K562 (cell line): ENCODE measurements at regions of chr13 and their contacts with region 1.

Region 1: GRCh38 chr13:41061075-41061913 is at the start of gene WBP4:
- DNase-seq: peak; percentile 71 to 92 (median 78)
- ATAC-seq: peak; percentile 83
- H3K4me3 ChIP-seq: peak within 1 kb of the TSS; percentile 60
- H3K27ac ChIP-seq: peak within 1 kb of the TSS; percentile 96
- H3K4me1 ChIP-seq: peaks cover 9 to 19% of the 10 kb centered on the region in 2 experiments; a peak in 3 of 5 replicates
- H3K27me3 ChIP-seq: no peaks in the 10 kb centered on the region
- CTCF ChIP-seq: peak; percentile 0 to 21 (median 12); a peak in 1 of 6 replicates
- EP300 ChIP-seq: no peak
- POLR2A ChIP-seq: peak; percentile 73
- RAD21 ChIP-seq: no peak
- polyA plus RNA-seq, gene WBP4: 5.5 to 6.1 TPM

Region 2: DNA sequence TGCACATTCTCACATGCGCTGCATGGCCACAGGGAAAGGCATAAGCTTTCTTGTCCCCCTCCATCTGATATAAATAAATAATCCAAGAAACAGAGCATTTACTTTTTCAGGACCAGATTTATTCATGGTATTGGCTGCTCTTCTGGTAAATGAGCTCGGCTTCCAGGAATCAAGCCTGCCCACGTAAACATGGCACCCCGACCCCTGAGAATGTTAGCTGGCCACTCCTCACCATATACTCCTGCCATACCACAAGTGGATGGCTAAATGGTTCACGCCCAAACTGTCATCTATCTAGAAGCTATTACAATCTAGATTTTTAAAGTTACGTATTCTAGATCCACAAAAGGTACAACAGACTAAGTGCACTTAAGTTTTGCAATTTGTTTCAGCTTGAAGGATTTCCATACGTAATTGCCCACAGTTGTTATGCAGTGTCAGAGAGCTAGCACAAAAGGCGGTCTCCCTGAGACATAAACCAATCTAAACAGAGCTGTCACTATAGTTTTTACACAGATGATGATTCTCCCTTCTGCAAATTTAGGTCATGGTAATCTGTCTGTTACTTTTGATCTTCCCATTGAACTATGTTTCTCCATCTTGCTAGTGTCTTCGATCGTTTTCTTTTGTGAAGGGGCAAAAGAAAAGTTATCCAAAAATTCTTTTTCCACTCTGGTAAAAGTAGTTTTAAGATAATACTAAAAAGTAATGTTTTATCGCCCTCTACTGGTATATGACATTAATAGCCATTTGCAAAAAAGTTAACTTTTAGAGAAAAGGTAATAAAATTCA is 378.6 kb before region 1 on chr13:
- CTCF ChIA-PET with region 1: no interaction called
- POLR2A ChIA-PET with region 1: no interaction called
- in situ Hi-C with region 1: no loop called
- intact Hi-C with region 1: no loop called
- DNase-seq: no peak
- ATAC-seq: no peak
- H3K4me3 ChIP-seq: no peak overlapping the region
- H3K27ac ChIP-seq: no peak overlapping the region
- H3K4me1 ChIP-seq: peaks cover 0 to 7% of the 10 kb centered on the region in 2 experiments; a peak in 2 of 5 replicates
- H3K27me3 ChIP-seq: peaks cover 3 to 4% of the 10 kb centered on the region in 2 experiments; a peak in 3 of 5 replicates
- CTCF ChIP-seq: peak in 1 of 3 experiments; percentile 57; a peak in 2 of 6 replicates
- EP300 ChIP-seq: no peak
- POLR2A ChIP-seq: no peak
- RAD21 ChIP-seq: peak; percentile 52 to 64

Region 3: DNA sequence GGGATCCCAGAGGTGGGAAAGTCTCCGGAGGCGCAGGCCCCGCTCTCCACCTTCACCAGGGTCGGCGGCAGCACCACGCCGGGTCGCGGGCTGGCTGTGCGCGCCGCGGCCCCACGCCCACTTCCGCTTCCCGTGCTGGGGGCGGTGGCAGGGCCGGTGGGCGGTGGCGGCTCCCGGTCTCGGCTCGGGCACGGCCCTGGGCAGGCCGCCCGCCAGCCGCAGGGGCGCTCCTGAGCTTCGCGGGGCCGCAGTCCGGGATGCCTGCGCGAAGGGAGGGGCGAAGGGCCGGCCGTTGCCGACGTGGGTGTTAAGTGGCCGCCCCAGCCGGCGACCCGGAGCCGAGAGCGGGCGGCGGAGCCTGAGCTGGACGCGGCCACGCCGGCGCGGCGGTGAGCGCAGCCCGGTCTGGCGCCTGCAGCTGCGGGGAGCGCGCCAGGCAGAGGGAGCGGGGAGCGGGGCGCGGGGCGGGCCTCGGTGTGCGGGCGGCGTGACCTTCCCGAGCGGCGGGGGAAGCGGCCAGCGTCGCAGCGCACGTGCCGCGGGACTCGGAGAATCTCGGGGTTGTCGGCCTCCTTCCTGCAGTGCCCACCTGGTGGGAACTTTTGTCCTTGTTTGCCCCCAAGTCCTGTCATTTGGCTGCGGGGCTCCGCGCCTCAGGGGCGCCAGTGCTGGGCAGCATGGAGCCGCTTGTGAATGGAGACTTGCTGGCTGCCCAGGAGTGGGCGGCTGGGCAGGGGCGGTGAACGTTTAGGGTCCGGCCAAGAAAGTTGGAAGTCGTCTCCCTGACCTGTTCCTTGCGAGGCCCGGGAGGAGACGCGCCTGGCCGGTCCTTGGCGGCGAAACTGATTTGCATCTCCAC is 271.8 kb before region 1 on chr13 and contains the start of gene SLC25A15:
- CTCF ChIA-PET with region 1: no interaction called
- POLR2A ChIA-PET with region 1: no interaction called
- in situ Hi-C with region 1: loop called (anchors 25 kb)
- intact Hi-C with region 1: no loop called
- DNase-seq: peak; percentile 72 to 86 (median 79)
- ATAC-seq: peak; percentile 90
- H3K4me3 ChIP-seq: peak within 1 kb of the TSS; percentile 60
- H3K27ac ChIP-seq: peak within 1 kb of the TSS; percentile 80
- H3K4me1 ChIP-seq: peaks cover 13 to 20% of the 10 kb centered on the region in 2 experiments
- H3K27me3 ChIP-seq: no peaks in the 10 kb centered on the region
- CTCF ChIP-seq: peak in 2 of 3 experiments; percentile 28 to 47; a peak in 3 of 6 replicates
- EP300 ChIP-seq: no peak
- POLR2A ChIP-seq: peak; percentile 71; the same call in 1 of the 2 replicates
- RAD21 ChIP-seq: peak in 1 of 2 experiments; percentile 37; a peak in 2 of 4 replicates
- polyA plus RNA-seq, gene SLC25A15: 3.5 to 6.6 TPM

Region 4: DNA sequence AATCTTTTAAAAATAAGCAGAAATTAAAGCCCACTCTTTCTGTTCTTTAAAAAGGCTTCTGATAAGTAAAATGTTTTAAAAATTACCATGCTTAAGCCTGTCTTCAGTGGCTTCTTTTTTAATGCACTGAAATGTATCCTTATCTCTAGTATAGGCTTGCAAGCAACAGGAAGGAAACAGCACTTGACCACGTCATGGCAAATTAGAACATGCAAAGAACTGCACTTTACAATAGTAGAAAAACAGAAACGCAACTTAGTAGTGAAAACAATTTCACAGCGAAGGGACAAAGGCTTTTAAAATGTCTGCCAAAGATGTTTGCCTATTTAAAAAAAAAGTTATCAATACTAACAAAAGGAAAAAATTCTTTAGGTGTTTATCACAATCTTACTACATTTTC is 78.5 kb before region 1 on chr13:
- CTCF ChIA-PET with region 1: no interaction called
- POLR2A ChIA-PET with region 1: interaction called, 3 read pairs
- in situ Hi-C with region 1: no loop called
- intact Hi-C with region 1: loop called (anchors 1 kb)
- DNase-seq: peak in 2 of 4 experiments; percentile 53 to 74
- ATAC-seq: peak; percentile 66
- H3K4me3 ChIP-seq: no peak overlapping the region
- H3K27ac ChIP-seq: peak overlapping the region; percentile 82; the same call in 2 of the 3 replicates
- H3K4me1 ChIP-seq: peaks cover 0 to 24% of the 10 kb centered on the region in 2 experiments; a peak in 1 of 5 replicates
- H3K27me3 ChIP-seq: no peaks in the 10 kb centered on the region
- CTCF ChIP-seq: no peak
- EP300 ChIP-seq: peak; percentile 68; the same call in 1 of the 2 replicates
- POLR2A ChIP-seq: no peak
- RAD21 ChIP-seq: no peak

Region 5: DNA sequence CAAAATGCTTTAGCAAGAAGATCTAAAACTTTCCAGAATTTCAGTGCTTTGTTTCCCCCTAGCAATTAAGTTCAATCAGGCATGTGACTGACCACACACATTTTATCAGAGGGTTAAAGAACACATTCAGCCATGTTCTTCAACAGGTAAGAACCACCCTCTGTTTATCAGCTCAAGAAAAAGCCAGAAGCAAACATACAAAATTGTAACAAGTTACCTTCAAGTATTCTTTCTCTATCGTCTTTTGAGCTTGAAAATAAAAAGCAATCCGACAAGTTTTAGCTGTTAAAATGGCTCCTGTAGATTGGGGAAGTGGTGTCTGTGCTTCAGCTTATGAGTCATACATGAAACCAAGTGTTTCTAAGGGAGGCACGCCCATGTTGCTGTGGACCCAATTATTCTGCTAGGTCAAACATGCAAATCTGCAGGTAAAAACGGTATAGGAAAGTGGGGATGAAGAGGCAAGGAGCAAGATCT is 42.2 kb before region 1 on chr13 and contains the start of gene ELF1:
- CTCF ChIA-PET with region 1: interaction called, 3 read pairs
- POLR2A ChIA-PET with region 1: interaction called, 4 read pairs
- in situ Hi-C with region 1: no loop called
- intact Hi-C with region 1: loop called (anchors 5 kb)
- DNase-seq: peak; percentile 43 to 84 (median 54)
- ATAC-seq: peak; percentile 82
- H3K4me3 ChIP-seq: peak within 1 kb of the TSS; percentile 53
- H3K27ac ChIP-seq: peak within 1 kb of the TSS; percentile 86
- H3K4me1 ChIP-seq: peaks cover 2 to 16% of the 10 kb centered on the region in 2 experiments; a peak in 4 of 5 replicates
- H3K27me3 ChIP-seq: no peaks in the 10 kb centered on the region
- CTCF ChIP-seq: no peak
- EP300 ChIP-seq: peak; percentile 33; the same call in 1 of the 2 replicates
- POLR2A ChIP-seq: peak; percentile 78
- RAD21 ChIP-seq: no peak
- polyA plus RNA-seq, gene ELF1: 30.4 to 36.8 TPM

Region 6: GRCh38 chr13:41132512-41133152 is 71.3 kb after region 1 on chr13 and contains the start of gene KBTBD6:
- CTCF ChIA-PET with region 1: interaction called, 3 read pairs
- POLR2A ChIA-PET with region 1: no interaction called
- in situ Hi-C with region 1: no loop called
- intact Hi-C with region 1: loop called (anchors 5 kb)
- DNase-seq: peak; percentile 76 to 97 (median 80)
- ATAC-seq: peak; percentile 88
- H3K4me3 ChIP-seq: peak within 1 kb of the TSS; percentile 54
- H3K27ac ChIP-seq: peak within 1 kb of the TSS; percentile 84
- H3K4me1 ChIP-seq: peaks cover 11 to 12% of the 10 kb centered on the region in 2 experiments; a peak in 4 of 5 replicates
- H3K27me3 ChIP-seq: no peaks in the 10 kb centered on the region
- CTCF ChIP-seq: no peak; a peak in 1 of 6 replicates
- EP300 ChIP-seq: 0 out of 2 replicates have a peak, but pooled peaks have one; percentile 15
- POLR2A ChIP-seq: peak; percentile 71
- RAD21 ChIP-seq: no peak
- polyA plus RNA-seq, gene KBTBD6: 2.1 to 2.8 TPM

Region 7: GRCh38 chr13:41193919-41194824 is 132.9 kb after region 1 on chr13 and contains the start of gene KBTBD7:
- CTCF ChIA-PET with region 1: no interaction called
- POLR2A ChIA-PET with region 1: no interaction called
- in situ Hi-C with region 1: no loop called
- intact Hi-C with region 1: loop called (anchors 5 kb)
- DNase-seq: peak; percentile 72 to 92 (median 79)
- ATAC-seq: peak; percentile 99
- H3K4me3 ChIP-seq: peak within 1 kb of the TSS; percentile 38
- H3K27ac ChIP-seq: peak within 1 kb of the TSS; percentile 75
- H3K4me1 ChIP-seq: peaks cover 4 to 11% of the 10 kb centered on the region in 2 experiments; a peak in 4 of 5 replicates
- H3K27me3 ChIP-seq: no peaks in the 10 kb centered on the region
- CTCF ChIP-seq: no peak
- EP300 ChIP-seq: no peak
- POLR2A ChIP-seq: peak; percentile 76
- RAD21 ChIP-seq: no peak
- polyA plus RNA-seq, gene KBTBD7: 1.8 to 2.3 TPM

Region 8: GRCh38 chr13:41299316-41300094 is 238.2 kb after region 1 on chr13:
- CTCF ChIA-PET with region 1: no interaction called
- POLR2A ChIA-PET with region 1: no interaction called
- in situ Hi-C with region 1: no loop called
- intact Hi-C with region 1: no loop called
- DNase-seq: no peak
- ATAC-seq: no peak
- H3K4me3 ChIP-seq: no peak overlapping the region
- H3K27ac ChIP-seq: no peak overlapping the region
- H3K4me1 ChIP-seq: no peaks in the 10 kb centered on the region
- H3K27me3 ChIP-seq: no peaks in the 10 kb centered on the region
- CTCF ChIP-seq: no peak
- EP300 ChIP-seq: no peak
- POLR2A ChIP-seq: no peak
- RAD21 ChIP-seq: no peak

Region 9: DNA sequence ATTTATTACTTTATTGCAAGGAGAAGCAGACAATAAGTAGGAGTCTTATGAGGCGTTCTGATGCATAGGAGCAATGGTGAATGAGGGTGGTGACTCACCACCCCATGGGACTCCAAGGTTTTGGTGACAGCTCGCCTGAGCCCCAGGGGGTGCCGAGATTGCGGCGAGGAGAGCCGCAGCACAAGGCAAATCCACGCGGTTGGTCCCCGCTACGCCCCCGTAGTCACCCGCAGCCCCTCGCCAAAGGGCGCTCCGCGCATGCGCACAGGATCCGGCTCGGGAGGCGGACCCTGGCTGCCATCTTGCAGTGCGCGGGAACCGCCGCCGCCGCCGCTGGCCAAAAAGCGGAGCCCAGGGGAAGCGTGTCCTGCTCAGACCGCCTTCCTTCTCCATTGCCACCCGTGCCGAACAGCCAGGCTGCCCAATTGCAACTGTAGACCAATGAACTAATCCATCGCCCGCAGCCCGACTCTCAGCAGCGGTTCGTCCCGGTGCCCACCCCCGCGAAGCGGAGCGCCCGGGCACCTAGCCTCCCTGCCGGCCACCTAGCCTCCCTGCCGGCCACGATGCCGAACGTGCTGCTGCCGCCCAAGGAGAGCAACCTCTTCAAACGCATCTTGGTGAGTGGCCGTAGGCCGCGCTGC is 249.8 kb after region 1 on chr13 and contains the start of gene NAA16:
- CTCF ChIA-PET with region 1: no interaction called
- POLR2A ChIA-PET with region 1: no interaction called
- in situ Hi-C with region 1: no loop called
- intact Hi-C with region 1: loop called (anchors 5 kb)
- DNase-seq: peak; percentile 90 to 93 (median 92)
- ATAC-seq: peak; percentile 85
- H3K4me3 ChIP-seq: peak within 1 kb of the TSS; percentile 98
- H3K27ac ChIP-seq: peak within 1 kb of the TSS; percentile 91
- H3K4me1 ChIP-seq: peaks cover 7 to 10% of the 10 kb centered on the region in 2 experiments; a peak in 3 of 5 replicates
- H3K27me3 ChIP-seq: no peaks in the 10 kb centered on the region
- CTCF ChIP-seq: no peak
- EP300 ChIP-seq: no peak
- POLR2A ChIP-seq: peak; percentile 81
- RAD21 ChIP-seq: no peak
- polyA plus RNA-seq, gene NAA16: 3.7 to 3.9 TPM